MCF 10A (cell line): ENCODE measurements at regions of chr20 and their contacts with region 1.

Region 1: GRCh38 chr20:46363800-46364634 is 42.4 kb downstream of the ELMO2 start:
- DNase-seq: peak; percentile 83
- H3K4me3 Mint-ChIP-seq: peak overlapping the region; percentile 91
- H3K27ac Mint-ChIP-seq: peak overlapping the region; percentile 92
- H3K4me1 Mint-ChIP-seq: peaks cover 29% of the 10 kb centered on the region
- H3K27me3 Mint-ChIP-seq: no peaks in the 10 kb centered on the region
- CTCF ChIP-seq: no peak

Region 2: DNA sequence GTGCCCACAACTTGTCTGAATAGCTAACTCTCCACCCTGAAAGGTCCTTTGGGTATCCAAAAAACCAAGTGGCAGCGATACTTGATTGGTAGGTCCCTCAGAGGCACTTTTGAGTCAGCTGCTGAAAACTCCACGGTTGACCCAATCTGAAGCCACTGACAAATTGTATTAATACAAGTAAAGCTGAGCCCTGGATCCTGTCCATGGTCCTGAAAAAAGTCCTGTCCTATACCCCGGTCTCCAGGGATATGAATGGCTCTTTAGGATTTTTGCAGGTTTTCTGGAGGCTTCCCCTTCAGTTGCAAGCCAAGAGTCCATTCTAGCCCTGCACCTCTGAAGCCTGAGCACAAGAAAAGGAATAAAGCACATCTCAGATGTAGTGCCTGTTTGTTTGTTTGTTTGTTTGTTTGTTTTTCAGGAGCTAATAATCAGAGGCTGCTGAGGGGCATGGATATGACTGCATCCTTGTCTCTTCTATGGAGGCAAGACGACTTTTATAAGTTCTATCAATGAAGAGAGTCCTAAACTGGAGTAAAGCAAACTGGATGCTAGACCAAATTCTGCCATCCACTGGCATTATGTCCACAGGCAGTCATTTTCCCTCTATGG is 336.7 kb before region 1 on chr20:
- CTCF ChIA-PET with region 1: no interaction called
- POLR2A ChIA-PET with region 1: no interaction called
- intact Hi-C with region 1: no loop called
- DNase-seq: peak; percentile 70
- H3K4me3 Mint-ChIP-seq: no peak overlapping the region
- H3K27ac Mint-ChIP-seq: no peak overlapping the region
- H3K4me1 Mint-ChIP-seq: peaks cover 6% of the 10 kb centered on the region
- H3K27me3 Mint-ChIP-seq: peaks cover 48% of the 10 kb centered on the region
- CTCF ChIP-seq: no peak

Region 3: DNA sequence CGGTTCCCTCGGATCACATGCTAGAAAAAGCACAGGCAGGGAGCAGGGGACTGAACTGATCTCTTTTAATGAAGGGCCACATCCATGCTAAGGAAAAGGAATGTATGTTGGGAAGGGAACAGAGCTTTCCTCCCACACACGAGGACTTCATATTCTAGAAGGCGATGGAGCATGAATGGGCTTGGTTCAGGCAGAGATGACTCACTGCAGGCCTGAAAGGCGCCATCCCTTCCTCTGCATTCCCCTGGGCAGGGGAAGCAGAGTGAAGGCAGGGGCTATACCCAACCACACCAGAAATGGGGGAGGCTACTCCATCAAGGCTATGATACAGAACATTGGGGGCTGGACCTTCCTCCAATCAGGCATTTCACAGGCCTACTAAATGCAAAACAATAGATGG is 11.8 kb after region 1 on chr20:
- CTCF ChIA-PET with region 1: interaction called, 5 read pairs
- POLR2A ChIA-PET with region 1: interaction called, 28 read pairs
- intact Hi-C with region 1: no loop called
- DNase-seq: no peak
- H3K4me3 Mint-ChIP-seq: no peak overlapping the region
- H3K27ac Mint-ChIP-seq: no peak overlapping the region
- H3K4me1 Mint-ChIP-seq: peaks cover 15% of the 10 kb centered on the region
- H3K27me3 Mint-ChIP-seq: no peaks in the 10 kb centered on the region
- CTCF ChIP-seq: no peak

Region 4: GRCh38 chr20:46400828-46401477 is 36.9 kb after region 1 on chr20:
- CTCF ChIA-PET with region 1: interaction called, 3 read pairs
- POLR2A ChIA-PET with region 1: interaction called, 56 read pairs
- intact Hi-C with region 1: no loop called
- DNase-seq: no peak
- H3K4me3 Mint-ChIP-seq: no peak overlapping the region
- H3K27ac Mint-ChIP-seq: peak overlapping the region; percentile 71
- H3K4me1 Mint-ChIP-seq: peaks cover 29% of the 10 kb centered on the region
- H3K27me3 Mint-ChIP-seq: no peaks in the 10 kb centered on the region
- CTCF ChIP-seq: no peak

Region 5: GRCh38 chr20:46406199-46406985 is 42.4 kb after region 1 on chr20 and contains the start of gene ELMO2:
- CTCF ChIA-PET with region 1: interaction called, 3 read pairs
- POLR2A ChIA-PET with region 1: interaction called, 56 read pairs
- intact Hi-C with region 1: no loop called
- DNase-seq: peak; percentile 97
- H3K4me3 Mint-ChIP-seq: peak within 1 kb of the TSS; percentile 90
- H3K27ac Mint-ChIP-seq: peak within 1 kb of the TSS; percentile 67
- H3K4me1 Mint-ChIP-seq: peaks cover 25% of the 10 kb centered on the region
- H3K27me3 Mint-ChIP-seq: no peaks in the 10 kb centered on the region
- CTCF ChIP-seq: no peak
- total RNA-seq, gene ELMO2: 21.1 and 31.7 TPM in 2 replicates

Region 6: DNA sequence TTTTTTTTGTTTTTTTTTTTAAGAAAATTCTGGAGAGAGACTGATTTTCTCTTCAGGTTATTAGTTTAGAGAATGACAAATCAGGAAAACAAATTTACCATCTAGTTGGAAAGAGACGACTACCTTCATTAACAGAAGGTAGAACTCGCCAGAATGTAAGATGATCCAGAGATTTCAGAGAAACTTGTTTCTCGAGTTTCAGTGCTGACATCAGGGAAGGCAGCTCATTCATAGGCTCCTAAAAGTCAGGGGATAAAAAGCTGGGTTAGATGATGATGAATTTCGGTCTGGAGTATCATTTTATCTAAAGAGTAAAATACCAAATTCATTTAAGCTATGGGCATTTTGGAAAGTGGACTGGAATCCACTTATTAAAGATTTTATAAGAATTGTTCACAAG is 121.4 kb after region 1 on chr20:
- CTCF ChIA-PET with region 1: no interaction called
- POLR2A ChIA-PET with region 1: no interaction called
- intact Hi-C with region 1: no loop called
- DNase-seq: no peak
- H3K4me3 Mint-ChIP-seq: no peak overlapping the region
- H3K27ac Mint-ChIP-seq: no peak overlapping the region
- H3K4me1 Mint-ChIP-seq: no peaks in the 10 kb centered on the region
- H3K27me3 Mint-ChIP-seq: peaks cover 79% of the 10 kb centered on the region
- CTCF ChIP-seq: no peak